Cardiac septum (tissue), 1 donor: ENCODE measurements at regions of chr6 and their contacts with region 1.

Region 1: DNA sequence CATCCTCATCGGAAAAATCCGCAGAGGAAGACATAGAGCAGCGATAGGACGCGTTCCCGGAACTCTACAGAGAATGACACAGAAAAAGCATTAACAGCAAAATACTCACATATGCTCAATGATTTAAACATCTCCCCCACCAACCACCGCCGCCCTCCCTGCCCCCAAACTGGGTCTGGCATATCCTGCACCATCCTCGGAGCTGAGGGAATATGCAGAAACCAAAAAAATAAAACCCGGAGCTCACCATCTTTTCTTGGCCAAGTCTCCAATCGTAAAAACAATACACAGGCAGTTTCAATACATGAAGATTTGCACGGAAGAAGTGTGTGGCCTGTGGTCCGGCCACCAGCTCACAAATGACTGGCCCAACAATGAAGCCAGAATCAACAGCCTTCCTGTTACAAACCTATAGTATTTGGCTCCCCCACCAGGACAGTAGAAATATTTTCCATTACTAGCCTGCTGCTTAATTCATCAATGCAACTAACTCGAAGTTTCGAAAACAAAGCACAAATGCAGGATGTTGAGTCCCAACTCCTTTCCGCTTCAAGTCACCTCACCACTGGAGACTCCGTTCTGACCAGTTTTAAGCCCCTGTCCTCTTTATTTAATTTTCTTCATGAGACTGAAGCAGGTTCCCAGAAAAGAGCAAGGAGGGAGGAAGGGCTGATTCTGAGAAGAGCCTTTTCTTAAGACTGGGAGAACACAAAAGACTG is 103.2 kb upstream of the BEND6 start:
- DNase-seq: no peak

Region 2: GRCh38 chr6:56708810-56709597 is 142.7 kb before region 1 on chr6:
- intact Hi-C with region 1: loop called (anchors 2 kb)
- DNase-seq: no peak

Region 3: DNA sequence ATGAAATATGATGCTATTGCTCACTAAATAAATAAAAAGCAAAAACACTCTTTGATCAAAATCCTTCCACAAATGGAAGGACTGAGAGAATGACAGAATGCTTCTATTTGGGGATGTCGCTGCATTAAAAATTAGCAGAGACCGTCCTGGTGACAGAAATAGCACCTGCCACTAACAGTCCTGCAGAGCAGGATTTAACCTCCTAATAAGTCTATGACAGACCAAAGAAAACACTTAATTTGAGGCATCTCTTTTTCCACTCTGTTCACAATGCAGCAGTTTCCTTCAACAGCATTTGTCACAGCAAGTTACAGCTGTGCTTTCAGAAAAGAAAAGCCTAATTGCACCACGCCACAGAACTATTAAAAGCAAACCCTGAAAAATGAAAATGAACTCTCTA is 37.4 kb before region 1 on chr6:
- intact Hi-C with region 1: no loop called
- DNase-seq: no peak